ENCODE measurements at regions of chr16 and their contacts with region 1.

Region 1: DNA sequence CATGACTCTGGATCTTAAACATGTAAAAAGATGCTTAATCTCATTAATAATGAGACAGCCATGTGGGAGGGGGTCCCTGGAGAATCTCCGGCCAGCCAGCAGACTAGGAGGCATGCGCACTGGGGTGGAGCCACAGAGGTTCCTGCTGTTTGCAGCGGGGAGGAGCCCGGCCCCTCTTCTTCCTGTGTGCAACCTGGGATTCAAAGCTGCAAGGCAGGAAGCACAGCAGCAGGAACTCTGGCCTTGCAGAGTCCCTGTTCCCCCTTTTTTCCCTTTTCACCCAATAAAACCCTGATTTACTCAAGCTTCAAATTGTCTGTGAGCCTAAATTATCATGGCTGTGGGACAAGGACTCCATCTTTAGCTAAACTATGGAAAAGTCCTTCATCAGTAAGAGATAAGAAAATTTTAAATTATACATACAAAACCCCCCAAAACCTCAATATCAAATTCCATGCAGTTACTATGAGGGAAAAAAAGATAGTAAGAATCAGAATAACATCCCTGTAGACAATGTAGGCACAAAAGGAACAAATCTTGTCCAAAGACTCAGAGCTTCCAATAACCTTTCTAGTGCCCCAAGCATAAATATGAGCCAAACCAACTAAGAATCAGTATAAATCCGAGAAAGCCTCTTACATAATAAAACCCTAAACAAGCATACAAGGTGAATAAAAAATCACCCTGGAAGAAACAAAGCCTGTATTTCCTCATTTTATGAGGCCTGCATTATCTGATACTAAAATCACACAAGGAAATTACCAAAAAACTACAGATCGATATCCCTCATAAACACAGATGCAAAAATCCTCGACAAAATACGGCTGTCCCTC is 12.1 kb downstream of the CFDP1 start:
- DNase-seq: peak; percentile 73
- ATAC-seq: peak; percentile 89
- H3K4me3 ChIP-seq: peak overlapping the region in 1 of 3 experiments; percentile 10; a peak in 1 of 6 replicates
- H3K27ac ChIP-seq: peak overlapping the region; percentile 49
- H3K4me1 ChIP-seq: peaks cover 85% of the 10 kb centered on the region
- H3K27me3 ChIP-seq: no peaks in the 10 kb centered on the region
- CTCF ChIP-seq: no peak
- EP300 ChIP-seq: no peak
- POLR2A ChIP-seq: peak in 1 of 2 experiments; percentile 67; a peak in 2 of 4 replicates
- RAD21 ChIP-seq: no peak

Region 2: DNA sequence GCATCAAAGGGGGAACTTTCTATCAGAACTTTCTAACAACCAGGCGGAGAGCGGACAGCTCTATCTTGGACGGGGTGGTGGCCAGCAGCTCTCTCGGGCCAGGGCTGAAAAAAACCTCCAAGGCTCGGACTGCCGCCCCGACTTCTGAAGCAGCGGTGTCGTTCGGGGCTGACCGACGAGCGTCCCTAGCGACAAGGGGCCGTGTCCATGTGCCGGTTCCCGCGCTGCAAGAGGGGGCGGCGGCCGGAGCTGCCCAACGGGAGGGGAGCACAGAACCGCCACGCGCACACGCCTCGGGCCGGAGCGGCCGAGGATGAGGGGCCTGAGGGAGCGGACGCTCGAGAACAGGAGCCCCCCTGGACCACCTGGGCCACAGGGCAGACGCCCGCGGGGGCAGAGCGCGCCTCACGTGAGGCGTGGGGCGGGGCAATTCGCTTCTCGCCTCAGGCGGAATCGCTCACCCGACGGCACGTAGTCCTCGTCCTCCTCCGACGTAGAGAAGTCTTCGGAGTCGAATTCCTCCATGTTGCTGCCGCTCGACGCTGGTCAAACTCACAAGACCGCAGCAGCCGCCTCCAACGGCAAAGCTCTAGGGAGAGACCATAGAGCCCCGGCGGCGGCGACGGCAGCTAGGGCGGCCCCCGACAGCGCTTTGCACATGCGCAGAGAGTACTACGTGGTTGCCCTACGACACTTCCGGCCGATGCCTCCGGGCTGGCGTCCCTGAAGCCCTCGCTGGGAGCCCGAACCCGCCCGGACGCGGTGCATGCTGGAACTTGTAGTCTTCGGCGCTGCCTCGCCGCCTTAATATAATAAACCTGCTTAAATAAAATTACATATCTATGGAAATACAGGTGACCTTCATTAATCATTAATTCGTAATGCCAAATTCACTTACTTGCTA is 11.9 kb after region 1 on chr16 and contains the start of gene CFDP1:
- CTCF ChIA-PET with region 1: no interaction called
- POLR2A ChIA-PET with region 1: interaction called, 18 read pairs
- in situ Hi-C with region 1: no loop called
- intact Hi-C with region 1: no loop called
- DNase-seq: peak; percentile 94
- ATAC-seq: peak; percentile 93
- H3K4me3 ChIP-seq: peak within 1 kb of the TSS; percentile 76 to 95 (median 78)
- H3K27ac ChIP-seq: peak within 1 kb of the TSS; percentile 94
- H3K4me1 ChIP-seq: peaks cover 58% of the 10 kb centered on the region
- H3K27me3 ChIP-seq: no peaks in the 10 kb centered on the region; a peak in 1 of 5 replicates
- CTCF ChIP-seq: peak; percentile 49
- EP300 ChIP-seq: peak in 1 of 2 experiments; percentile 11; a peak in 1 of 4 replicates
- POLR2A ChIP-seq: peak; percentile 81 to 88
- RAD21 ChIP-seq: peak; percentile 23; the same call in 1 of the 2 replicates
- total RNA-seq, gene CFDP1: 153 and 198 TPM in 2 replicates